ENCODE measurements at regions of chr7 and their contacts with region 1.

Region 1: GRCh38 chr7:44082541-44083207 is 344 bp upstream of the POLM start:
- DNase-seq: peak; percentile 88 to 99 (median 98)
- ATAC-seq: peak; percentile 96
- H3K4me3 ChIP-seq: peak overlapping the region; percentile 59
- H3K4me3 Mint-ChIP-seq: peak overlapping the region; percentile 79 to 91 (median 87)
- H3K27ac ChIP-seq: peak overlapping the region; percentile 92
- H3K27ac Mint-ChIP-seq: peak overlapping the region; percentile 44 to 95 (median 80)
- H3K4me1 ChIP-seq: peaks cover 15 to 16% of the 10 kb centered on the region in 2 donors
- H3K4me1 Mint-ChIP-seq: peaks cover 11 to 30% (median 18%) of the 10 kb centered on the region in 7 donors
- H3K27me3 ChIP-seq: no peaks in the 10 kb centered on the region
- H3K27me3 Mint-ChIP-seq: peaks cover 0 to 4% (median 0%) of the 10 kb centered on the region in 5 donors

Region 2: GRCh38 chr7:43869006-43869866 is 213.4 kb before region 1 on chr7 and contains the start of gene MRPS24:
- CTCF ChIA-PET with region 1: no interaction called
- POLR2A ChIA-PET with region 1: interaction called, 3 read pairs
- intact Hi-C with region 1: loop called in 1 of 2 experiments (anchors 5 kb)
- DNase-seq: peak; percentile 84 to 95 (median 92)
- ATAC-seq: peak; percentile 100
- H3K4me3 ChIP-seq: peak within 1 kb of the TSS; percentile 92
- H3K4me3 Mint-ChIP-seq: peak within 1 kb of the TSS; percentile 88 to 97 (median 95)
- H3K27ac ChIP-seq: peak within 1 kb of the TSS; percentile 78
- H3K27ac Mint-ChIP-seq: peak within 1 kb of the TSS; percentile 86 to 97 (median 90)
- H3K4me1 ChIP-seq: peaks cover 13 to 15% of the 10 kb centered on the region in 2 donors
- H3K4me1 Mint-ChIP-seq: peaks cover 0 to 24% (median 22%) of the 10 kb centered on the region in 7 donors
- H3K27me3 ChIP-seq: no peaks in the 10 kb centered on the region
- H3K27me3 Mint-ChIP-seq: no peaks in the 10 kb centered on the region
- total RNA-seq, gene MRPS24: 44.2 to 76.6 (median 62.3) TPM

Region 3: DNA sequence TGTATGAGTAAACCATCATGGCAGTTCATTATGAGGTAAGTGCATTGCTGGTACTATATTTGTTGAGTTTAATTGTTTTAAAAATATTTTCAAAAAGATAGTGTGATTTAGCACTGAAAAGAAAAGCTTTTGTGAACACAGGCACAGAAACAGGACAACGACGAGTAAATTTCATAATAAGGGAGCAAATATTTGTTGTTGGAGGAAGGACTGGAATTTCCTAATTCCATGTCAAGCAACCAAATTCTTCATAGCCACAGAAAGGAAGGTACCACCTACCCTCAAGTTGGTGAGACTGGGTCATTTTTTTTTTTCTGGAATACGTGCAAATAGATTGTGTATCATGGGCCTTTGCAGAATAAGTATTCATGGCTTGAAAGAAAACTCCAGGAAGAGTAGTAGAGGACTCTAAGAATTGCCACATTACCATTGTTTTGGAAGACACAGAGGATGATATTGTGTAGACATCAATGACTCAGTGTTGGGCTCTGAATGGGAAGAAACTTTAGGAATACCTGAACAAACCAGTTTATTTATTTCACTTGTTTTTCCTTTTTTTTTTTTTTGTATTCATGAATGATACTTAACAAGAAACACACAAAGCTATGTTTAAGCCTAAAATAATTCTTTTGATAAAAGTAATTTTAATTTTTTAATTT is 148.6 kb before region 1 on chr7:
- CTCF ChIA-PET with region 1: no interaction called
- POLR2A ChIA-PET with region 1: no interaction called
- intact Hi-C with region 1: no loop called
- DNase-seq: no peak
- ATAC-seq: no peak
- H3K4me3 ChIP-seq: no peak overlapping the region
- H3K4me3 Mint-ChIP-seq: no peak overlapping the region
- H3K27ac ChIP-seq: no peak overlapping the region
- H3K27ac Mint-ChIP-seq: no peak overlapping the region
- H3K4me1 ChIP-seq: no peaks in the 10 kb centered on the region
- H3K4me1 Mint-ChIP-seq: peaks cover 0 to 13% (median 7%) of the 10 kb centered on the region in 7 donors
- H3K27me3 ChIP-seq: no peaks in the 10 kb centered on the region
- H3K27me3 Mint-ChIP-seq: no peaks in the 10 kb centered on the region

Region 4: GRCh38 chr7:44065436-44066118 is 17.1 kb before region 1 on chr7 and contains the start of gene PGAM2:
- CTCF ChIA-PET with region 1: interaction called, 7 read pairs
- POLR2A ChIA-PET with region 1: interaction called, 53 read pairs
- intact Hi-C with region 1: loop called in 1 of 2 experiments (anchors 1 kb)
- DNase-seq: no peak
- ATAC-seq: peak; percentile 40
- H3K4me3 ChIP-seq: no peak within 1 kb of the TSS
- H3K4me3 Mint-ChIP-seq: peak within 1 kb of the TSS in 6 of 10 donors; percentile 16 to 51 (median 38)
- H3K27ac ChIP-seq: peak within 1 kb of the TSS; percentile 48
- H3K27ac Mint-ChIP-seq: peak within 1 kb of the TSS in 8 of 9 donors; percentile 40 to 80 (median 58)
- H3K4me1 ChIP-seq: peaks cover 0 to 18% of the 10 kb centered on the region in 2 donors
- H3K4me1 Mint-ChIP-seq: peaks cover 7 to 40% (median 34%) of the 10 kb centered on the region in 7 donors
- H3K27me3 ChIP-seq: no peaks in the 10 kb centered on the region
- H3K27me3 Mint-ChIP-seq: no peaks in the 10 kb centered on the region
- total RNA-seq, gene PGAM2: 0.73 to 3.1 (median 1.8) TPM

Region 5: GRCh38 chr7:44123190-44124003 is 40.7 kb after region 1 on chr7 and contains the start of gene POLD2:
- CTCF ChIA-PET with region 1: no interaction called
- POLR2A ChIA-PET with region 1: interaction called, 7 read pairs
- intact Hi-C with region 1: loop called (anchors 1 kb)
- DNase-seq: peak; percentile 88 to 99 (median 94)
- ATAC-seq: peak; percentile 99
- H3K4me3 ChIP-seq: peak within 1 kb of the TSS; percentile 89
- H3K4me3 Mint-ChIP-seq: peak within 1 kb of the TSS; percentile 82 to 97 (median 93)
- H3K27ac ChIP-seq: peak within 1 kb of the TSS; percentile 74
- H3K27ac Mint-ChIP-seq: peak within 1 kb of the TSS; percentile 40 to 96 (median 87)
- H3K4me1 ChIP-seq: peaks cover 8 to 9% of the 10 kb centered on the region in 2 donors
- H3K4me1 Mint-ChIP-seq: peaks cover 18 to 40% (median 39%) of the 10 kb centered on the region in 7 donors
- H3K27me3 ChIP-seq: no peaks in the 10 kb centered on the region
- H3K27me3 Mint-ChIP-seq: peaks cover 0 to 23% (median 0%) of the 10 kb centered on the region in 5 donors
- total RNA-seq, gene POLD2: 55.1 to 118 (median 69.2) TPM

Region 6: DNA sequence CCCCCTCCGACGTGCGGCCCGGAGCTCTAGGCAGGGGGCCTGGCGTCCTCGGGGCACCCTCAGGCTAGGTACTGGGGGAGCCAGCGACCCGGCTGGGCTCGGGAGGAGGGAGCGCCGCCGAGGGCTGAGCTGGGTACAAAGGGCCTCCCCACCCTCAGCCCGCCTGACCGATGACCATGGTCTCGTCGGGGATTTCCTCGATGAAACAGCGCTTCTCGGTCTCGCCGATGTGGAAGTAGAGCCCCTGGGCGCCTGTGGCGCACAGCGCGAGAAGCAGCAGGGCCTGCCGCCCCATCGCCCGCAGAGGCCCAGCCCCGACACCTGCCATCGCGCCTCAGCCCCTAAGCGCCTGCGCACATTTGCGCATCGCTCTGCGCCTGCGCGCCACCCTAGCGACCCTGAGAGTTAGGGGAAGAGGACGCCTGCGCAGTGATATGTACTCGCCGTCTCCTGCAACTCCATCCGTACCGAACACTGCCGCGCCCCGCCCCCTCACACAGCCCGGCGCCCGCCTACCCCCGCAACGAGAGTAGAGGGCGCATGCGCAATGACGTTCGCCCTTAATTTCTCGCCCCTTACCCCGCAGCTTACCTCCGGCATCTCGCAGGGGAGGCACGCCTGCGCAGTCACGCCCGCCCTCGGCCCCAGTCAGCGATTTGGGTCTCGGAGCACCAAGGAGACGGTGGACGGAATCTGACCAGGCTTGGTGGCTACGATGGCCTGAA is 499.4 kb after region 1 on chr7 and contains the start of gene TMED4:
- CTCF ChIA-PET with region 1: no interaction called
- POLR2A ChIA-PET with region 1: no interaction called
- intact Hi-C with region 1: loop called (anchors 1 kb)
- DNase-seq: peak; percentile 100
- ATAC-seq: peak; percentile 96
- H3K4me3 ChIP-seq: peak within 1 kb of the TSS; percentile 95
- H3K4me3 Mint-ChIP-seq: peak within 1 kb of the TSS; percentile 86 to 97 (median 92)
- H3K27ac ChIP-seq: peak within 1 kb of the TSS; percentile 90
- H3K27ac Mint-ChIP-seq: peak within 1 kb of the TSS; percentile 95 to 99 (median 98)
- H3K4me1 ChIP-seq: peaks cover 14 to 19% of the 10 kb centered on the region in 2 donors
- H3K4me1 Mint-ChIP-seq: peaks cover 13 to 43% (median 38%) of the 10 kb centered on the region in 7 donors
- H3K27me3 ChIP-seq: no peaks in the 10 kb centered on the region
- H3K27me3 Mint-ChIP-seq: peaks cover 0 to 12% (median 0%) of the 10 kb centered on the region in 5 donors
- total RNA-seq, gene TMED4: 70.0 to 98.5 (median 95.3) TPM

Region 7: GRCh38 chr7:44980393-44981034 is 897.8 kb after region 1 on chr7:
- CTCF ChIA-PET with region 1: no interaction called
- POLR2A ChIA-PET with region 1: no interaction called
- intact Hi-C with region 1: loop called in 1 of 2 experiments (anchors 5 kb)
- DNase-seq: peak in 2 of 9 donors; percentile 63 to 69
- ATAC-seq: peak; percentile 38
- H3K4me3 ChIP-seq: peak overlapping the region; percentile 78
- H3K4me3 Mint-ChIP-seq: peak overlapping the region; percentile 39 to 100 (median 70)
- H3K27ac ChIP-seq: peak overlapping the region; percentile 83
- H3K27ac Mint-ChIP-seq: peak overlapping the region; percentile 85 to 99 (median 96)
- H3K4me1 ChIP-seq: peaks cover 60 to 63% of the 10 kb centered on the region in 2 donors
- H3K4me1 Mint-ChIP-seq: peaks cover 54 to 96% (median 68%) of the 10 kb centered on the region in 7 donors
- H3K27me3 ChIP-seq: no peaks in the 10 kb centered on the region
- H3K27me3 Mint-ChIP-seq: no peaks in the 10 kb centered on the region